ENCODE measurements at regions of chr2 and their contacts with region 1.

Region 1: DNA sequence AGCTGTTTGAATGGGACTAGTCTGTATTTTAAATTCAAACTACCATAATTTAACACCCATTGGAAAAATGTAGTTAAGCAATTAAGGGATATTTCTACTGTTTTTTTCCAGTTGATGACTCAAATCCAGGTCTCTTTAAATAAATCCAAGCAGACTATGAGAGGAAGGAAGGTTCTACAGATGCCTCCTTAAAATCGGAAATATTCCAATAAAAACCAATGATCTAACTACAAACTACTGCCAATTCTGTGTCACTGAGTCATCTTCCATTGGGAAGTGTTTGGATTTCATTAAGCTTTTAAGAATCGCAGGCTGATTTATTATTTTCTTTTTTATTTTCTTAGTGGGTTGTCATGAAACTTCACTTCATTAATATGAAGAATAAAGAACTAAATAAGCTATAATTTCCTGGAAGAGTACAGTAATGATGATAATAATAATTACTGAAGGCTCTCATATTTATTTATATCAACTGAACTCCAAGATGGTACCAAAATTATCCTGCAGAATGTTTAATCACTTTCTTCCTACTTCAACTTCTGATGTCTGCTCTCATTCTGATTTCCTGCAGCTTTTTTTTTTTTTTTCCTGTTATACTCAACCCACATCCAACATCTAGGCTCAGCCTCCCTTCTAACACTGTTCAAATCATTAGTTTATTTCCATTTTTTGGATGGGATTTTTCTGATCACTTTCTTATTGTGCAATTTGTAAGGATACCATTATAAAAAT is 166.3 kb upstream of the FN1 start:
- DNase-seq: no peak
- H3K4me3 ChIP-seq: no peak overlapping the region
- H3K27ac ChIP-seq: no peak overlapping the region
- H3K4me1 ChIP-seq: peaks cover 14% of the 10 kb centered on the region
- H3K27me3 ChIP-seq: no peaks in the 10 kb centered on the region
- CTCF ChIP-seq: no peak

Region 2: DNA sequence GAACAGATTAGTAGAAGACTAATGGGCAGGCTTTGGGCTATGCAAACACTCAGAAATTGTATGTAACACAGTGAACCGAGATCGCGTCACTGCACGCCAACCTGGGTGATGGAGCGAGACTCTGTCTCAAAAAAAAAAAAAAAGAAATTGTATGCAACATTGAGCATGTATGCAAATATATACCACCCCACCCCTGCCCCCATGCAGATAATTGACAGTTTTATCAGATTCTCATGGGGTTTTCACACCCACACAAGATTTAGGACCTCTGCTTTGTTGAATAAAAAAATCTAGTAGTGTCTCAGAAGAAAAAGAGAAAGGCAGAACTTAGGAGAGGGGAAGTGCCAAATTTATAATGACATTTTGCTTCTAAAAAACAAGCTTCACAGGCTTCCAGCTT is 34.7 kb before region 1 on chr2:
- CTCF ChIA-PET with region 1: no interaction called
- dilution Hi-C with region 1: loop called (anchors 5 kb)
- in situ Hi-C with region 1: no loop called
- intact Hi-C with region 1: no loop called
- DNase-seq: no peak
- H3K4me3 ChIP-seq: no peak overlapping the region
- H3K27ac ChIP-seq: no peak overlapping the region
- H3K4me1 ChIP-seq: no peaks in the 10 kb centered on the region
- H3K27me3 ChIP-seq: no peaks in the 10 kb centered on the region
- CTCF ChIP-seq: no peak

Region 3: DNA sequence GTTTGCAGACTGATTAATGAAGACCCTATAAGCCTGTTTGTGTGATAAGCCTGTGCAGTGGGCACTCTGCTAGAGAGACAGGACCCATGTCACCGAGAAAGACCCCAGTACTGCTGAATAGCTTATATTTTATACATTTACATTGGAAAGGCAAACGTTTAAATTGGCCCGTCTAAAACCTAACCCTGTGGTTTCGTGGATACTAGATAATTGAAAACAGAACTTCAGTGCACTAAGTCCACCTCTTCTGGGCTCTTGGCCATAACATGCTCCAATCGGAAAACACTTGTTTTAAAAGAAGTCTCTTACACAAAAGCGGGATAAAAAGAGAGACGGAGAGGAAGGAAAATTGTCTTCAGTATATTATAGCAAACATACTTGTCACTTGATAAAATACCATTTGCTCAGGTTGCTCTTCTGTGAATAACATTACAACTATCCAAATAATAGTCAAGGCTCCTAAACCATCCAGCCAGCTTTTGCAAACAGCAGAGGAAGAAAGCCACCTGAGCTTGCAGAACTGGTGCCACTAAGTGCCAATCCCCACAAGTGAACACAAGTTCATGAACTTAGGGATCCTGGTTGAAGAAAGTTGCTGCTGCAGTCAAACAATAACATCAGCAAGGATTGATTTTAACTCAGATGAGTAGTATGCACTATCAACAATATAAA is 52.1 kb after region 1 on chr2:
- CTCF ChIA-PET with region 1: no interaction called
- dilution Hi-C with region 1: no loop called
- in situ Hi-C with region 1: no loop called
- intact Hi-C with region 1: no loop called
- DNase-seq: no peak
- H3K4me3 ChIP-seq: no peak overlapping the region
- H3K27ac ChIP-seq: no peak overlapping the region
- H3K4me1 ChIP-seq: peaks cover 16% of the 10 kb centered on the region
- H3K27me3 ChIP-seq: no peaks in the 10 kb centered on the region
- CTCF ChIP-seq: no peak

Region 4: DNA sequence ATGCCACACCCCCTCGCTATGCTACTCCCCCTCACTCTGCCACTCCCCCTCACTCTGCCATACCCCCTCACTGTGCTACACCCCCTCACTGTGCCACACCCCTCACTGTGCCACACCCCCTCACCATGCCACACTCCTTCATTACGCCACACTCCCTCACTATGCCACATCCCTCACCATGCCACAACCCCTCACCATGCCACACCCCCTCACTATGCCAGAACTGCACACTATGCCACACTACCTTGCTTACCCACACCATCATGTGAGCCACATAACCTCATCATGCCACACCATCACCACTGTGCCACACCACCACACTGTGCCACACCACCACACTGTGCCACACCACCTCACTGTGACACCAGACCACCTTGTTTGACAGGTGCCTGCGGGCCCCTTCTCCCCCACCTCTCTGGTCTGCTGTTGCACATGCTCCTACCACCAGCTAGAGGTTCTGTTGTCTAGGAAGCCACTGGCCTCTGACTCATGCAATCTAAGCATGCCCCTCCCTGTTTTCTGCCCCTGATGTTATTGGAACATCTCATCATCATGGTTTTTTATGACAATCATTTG is 748.1 kb after region 1 on chr2:
- CTCF ChIA-PET with region 1: no interaction called
- dilution Hi-C with region 1: no loop called
- in situ Hi-C with region 1: no loop called
- intact Hi-C with region 1: no loop called
- DNase-seq: peak; percentile 75
- H3K4me3 ChIP-seq: no peak overlapping the region
- H3K27ac ChIP-seq: no peak overlapping the region
- H3K4me1 ChIP-seq: peaks cover 22% of the 10 kb centered on the region
- H3K27me3 ChIP-seq: peaks cover 2% of the 10 kb centered on the region
- CTCF ChIP-seq: no peak

Measured in mammary epithelial cell (primary cell).